Heart right ventricle (tissue), 16 donors: ENCODE measurements at regions of chr1 and their contacts with region 1.

Region 1: DNA sequence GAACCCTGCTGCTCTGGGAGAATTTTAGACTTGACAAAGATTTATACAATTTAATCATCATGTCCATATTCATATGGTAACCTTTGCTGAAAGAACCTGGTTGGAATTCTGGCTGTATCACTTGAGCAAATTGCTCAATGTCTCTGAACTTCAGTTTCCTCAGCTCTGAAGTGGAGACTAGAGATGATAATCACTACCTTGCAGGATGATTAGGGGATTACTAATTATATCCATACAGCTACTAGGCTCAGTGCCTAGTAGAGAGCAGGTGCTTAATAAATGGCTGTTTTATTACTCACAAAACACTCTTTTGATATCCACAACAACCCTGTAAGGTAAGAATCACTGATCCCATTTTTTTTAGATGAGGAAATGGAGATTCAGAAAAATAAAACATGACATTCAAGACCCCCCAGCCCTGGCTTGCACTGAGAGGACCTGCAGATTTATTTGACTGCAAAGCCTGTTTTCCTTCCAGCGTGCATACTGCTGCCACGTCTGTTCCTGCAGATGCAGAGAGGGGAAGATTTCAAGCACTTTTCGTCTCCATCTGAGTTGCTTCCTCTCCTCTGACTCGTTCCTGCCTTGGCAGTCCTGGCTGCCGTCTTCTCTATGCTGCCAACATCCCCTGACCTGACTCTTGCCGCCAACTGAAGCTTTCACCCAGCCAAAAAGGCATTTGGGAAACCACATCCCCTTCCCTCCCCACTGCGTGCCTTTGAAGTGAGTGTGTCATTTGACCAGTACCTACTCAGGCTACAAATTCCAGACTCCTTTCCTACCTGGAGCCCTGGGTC is 203.0 kb downstream of the PLPP3 start:
- DNase-seq: peak in 1 of 2 donors; percentile 41
- ATAC-seq: peak; percentile 26 to 75 (median 54)
- H3K4me3 ChIP-seq: peak overlapping the region in 1 of 10 donors; percentile 2
- H3K27ac ChIP-seq: peak overlapping the region in 9 of 10 donors; percentile 3 to 82 (median 65)
- H3K4me1 ChIP-seq: peaks cover 18 to 67% (median 52%) of the 10 kb centered on the region in 9 donors
- H3K27me3 ChIP-seq: peaks cover 0 to 7% (median 0%) of the 10 kb centered on the region in 7 donors
- CTCF ChIP-seq: no peak

Region 2: DNA sequence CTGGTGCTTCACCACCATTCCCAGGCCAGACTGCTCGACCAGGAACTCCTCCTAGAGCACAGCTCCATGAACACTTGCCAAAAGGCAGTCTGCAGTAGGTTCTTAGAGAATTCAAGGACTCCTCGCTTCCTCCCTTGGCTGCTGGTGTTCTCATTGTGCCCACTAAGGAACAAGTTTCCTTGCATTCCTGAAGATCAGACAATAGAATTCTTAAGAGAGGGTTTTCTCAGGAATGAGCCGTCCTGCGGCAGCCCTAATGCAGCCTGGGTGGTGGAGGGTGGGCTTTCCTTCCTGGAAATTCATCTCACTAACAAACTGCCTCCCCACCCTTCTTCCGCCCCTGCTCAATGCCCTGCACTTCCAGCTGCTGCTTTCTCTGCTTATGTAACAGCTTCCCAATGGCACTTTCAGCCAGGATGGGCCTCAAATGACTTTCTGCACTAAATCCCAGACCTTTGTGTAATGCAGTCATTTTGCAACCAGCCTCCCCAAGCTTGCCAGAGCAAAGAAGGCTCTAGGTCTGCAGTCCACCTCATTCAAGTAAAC is 84.9 kb before region 1 on chr1:
- intact Hi-C with region 1: loop called in 1 of 10 experiments (anchors 5 kb)
- DNase-seq: peak; percentile 16 to 40
- ATAC-seq: peak; percentile 67 to 90 (median 80)
- H3K4me3 ChIP-seq: no peak overlapping the region
- H3K27ac ChIP-seq: peak overlapping the region in 7 of 10 donors; percentile 10 to 73 (median 42)
- H3K4me1 ChIP-seq: peaks cover 0 to 39% (median 10%) of the 10 kb centered on the region in 9 donors
- H3K27me3 ChIP-seq: no peaks in the 10 kb centered on the region
- CTCF ChIP-seq: no peak

Region 3: DNA sequence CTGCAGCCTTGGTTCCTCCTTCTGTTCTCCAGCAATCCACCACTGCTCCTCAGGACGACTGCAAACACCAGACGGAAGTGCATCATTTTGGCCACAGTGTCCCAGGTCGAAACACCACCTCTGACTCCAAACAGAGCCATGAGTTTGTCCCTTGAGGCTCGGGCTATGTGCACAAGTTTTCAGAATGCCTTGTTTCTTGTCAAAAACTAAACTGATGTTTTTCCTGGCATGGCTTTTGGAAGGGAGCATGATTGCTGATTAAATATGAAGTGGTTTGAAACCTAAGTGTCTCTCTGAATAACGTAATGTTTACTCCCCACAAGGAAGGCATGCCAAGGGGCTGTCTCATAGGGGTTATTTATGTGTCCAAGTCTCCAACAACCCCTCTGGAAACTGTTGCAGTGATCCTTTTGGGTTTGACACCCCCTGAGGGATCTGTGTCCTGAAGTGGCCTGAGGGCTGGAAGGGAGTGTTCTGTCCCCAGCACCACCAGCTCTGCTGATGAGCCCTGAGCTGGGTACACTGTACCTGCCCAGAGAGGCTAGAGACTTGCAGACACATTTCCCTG is 70.2 kb after region 1 on chr1:
- intact Hi-C with region 1: loop called in 1 of 10 experiments (anchors 10 kb)
- DNase-seq: peak; percentile 39 to 46
- ATAC-seq: peak; percentile 49 to 96 (median 81)
- H3K4me3 ChIP-seq: no peak overlapping the region
- H3K27ac ChIP-seq: peak overlapping the region; percentile 41 to 75 (median 56)
- H3K4me1 ChIP-seq: peaks cover 11 to 53% (median 38%) of the 10 kb centered on the region in 9 donors
- H3K27me3 ChIP-seq: no peaks in the 10 kb centered on the region
- CTCF ChIP-seq: no peak

Region 4: DNA sequence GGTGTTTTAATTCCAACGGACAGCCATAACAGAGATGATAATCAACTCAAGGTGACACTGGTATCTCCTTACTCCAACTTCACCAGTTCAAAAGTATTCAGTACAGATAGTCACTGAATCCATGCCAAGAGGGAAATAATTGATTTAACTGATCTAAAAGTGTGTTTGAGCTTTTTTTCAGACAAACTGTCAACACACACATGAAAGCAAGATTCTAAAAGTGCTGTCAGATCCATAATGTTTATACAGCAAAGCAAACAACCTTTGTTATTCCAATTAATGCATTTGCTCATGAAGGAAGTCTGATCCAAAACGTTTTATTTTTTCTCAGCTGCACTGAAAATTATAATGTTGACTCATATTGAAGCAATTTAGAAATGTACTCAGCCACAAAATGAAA is 262.8 kb after region 1 on chr1:
- intact Hi-C with region 1: no loop called
- DNase-seq: no peak
- ATAC-seq: no peak
- H3K4me3 ChIP-seq: no peak overlapping the region
- H3K27ac ChIP-seq: no peak overlapping the region
- H3K4me1 ChIP-seq: peaks cover 0 to 8% (median 1%) of the 10 kb centered on the region in 9 donors
- H3K27me3 ChIP-seq: peaks cover 0 to 23% (median 0%) of the 10 kb centered on the region in 7 donors
- CTCF ChIP-seq: no peak